ENCODE measurements at regions of chr1 and their contacts with region 1.

Region 1: GRCh38 chr1:26259578-26259977 is 20.3 kb upstream of the SH3BGRL3 start:
- DNase-seq: peak in 2 of 14 experiments; percentile 32 to 35
- ATAC-seq: no peak
- H3K4me3 ChIP-seq: no peak overlapping the region
- H3K4me3 Mint-ChIP-seq: no peak overlapping the region
- H3K27ac ChIP-seq: no peak overlapping the region
- H3K27ac Mint-ChIP-seq: no peak overlapping the region
- H3K4me1 ChIP-seq: no peaks in the 10 kb centered on the region
- H3K4me1 Mint-ChIP-seq: peaks cover 5% of the 10 kb centered on the region
- H3K27me3 ChIP-seq: no peaks in the 10 kb centered on the region
- H3K27me3 Mint-ChIP-seq: no peaks in the 10 kb centered on the region
- CTCF ChIP-seq: no peak

Region 2: GRCh38 chr1:26083246-26083645 is 176.3 kb before region 1 on chr1:
- CTCF ChIA-PET with region 1: no interaction called
- POLR2A ChIA-PET with region 1: no interaction called
- intact Hi-C with region 1: loop called in 1 of 2 experiments (anchors 10 kb)
- DNase-seq: no peak
- ATAC-seq: no peak
- H3K4me3 ChIP-seq: no peak overlapping the region
- H3K4me3 Mint-ChIP-seq: no peak overlapping the region
- H3K27ac ChIP-seq: no peak overlapping the region
- H3K27ac Mint-ChIP-seq: no peak overlapping the region
- H3K4me1 ChIP-seq: no peaks in the 10 kb centered on the region
- H3K4me1 Mint-ChIP-seq: no peaks in the 10 kb centered on the region
- H3K27me3 ChIP-seq: peaks cover 0 to 15% of the 10 kb centered on the region in 2 experiments
- H3K27me3 Mint-ChIP-seq: peaks cover 24% of the 10 kb centered on the region
- CTCF ChIP-seq: no peak